ENCODE measurements at regions of chr1 and their contacts with region 1.

Region 1: GRCh38 chr1:231357831-231358354 is 19.8 kb downstream of the SPRTN start:
- DNase-seq: peak; percentile 63 to 68
- ATAC-seq: peak; percentile 75 to 78
- H3K4me3 ChIP-seq: peak overlapping the region in 1 of 4 donors; percentile 10
- H3K27ac ChIP-seq: peak overlapping the region; percentile 76 to 87 (median 82)
- H3K4me1 ChIP-seq: peaks cover 28 to 34% of the 10 kb centered on the region in 2 donors
- H3K27me3 ChIP-seq: no peaks in the 10 kb centered on the region
- CTCF ChIP-seq: peak; percentile 75 to 85 (median 81)
- POLR2A ChIP-seq: peak in 1 of 2 donors; percentile 43

Region 2: GRCh38 chr1:231315887-231316286 is 42.0 kb before region 1 on chr1:
- in situ Hi-C with region 1: no loop called
- intact Hi-C with region 1: no loop called
- DNase-seq: no peak
- ATAC-seq: peak; percentile 17 to 36
- H3K4me3 ChIP-seq: no peak overlapping the region
- H3K27ac ChIP-seq: no peak overlapping the region
- H3K4me1 ChIP-seq: no peaks in the 10 kb centered on the region
- H3K27me3 ChIP-seq: no peaks in the 10 kb centered on the region
- CTCF ChIP-seq: peak; percentile 25 to 64 (median 49)
- POLR2A ChIP-seq: no peak

Region 3: GRCh38 chr1:231383159-231383860 is 25.4 kb after region 1 on chr1:
- in situ Hi-C with region 1: no loop called
- intact Hi-C with region 1: loop called (anchors 1 kb)
- DNase-seq: peak; percentile 62 to 83
- ATAC-seq: peak; percentile 82 to 84
- H3K4me3 ChIP-seq: peak overlapping the region in 3 of 4 donors; percentile 16 to 50 (median 33)
- H3K27ac ChIP-seq: peak overlapping the region; percentile 82 to 89 (median 89)
- H3K4me1 ChIP-seq: peaks cover 86 to 94% of the 10 kb centered on the region in 2 donors
- H3K27me3 ChIP-seq: no peaks in the 10 kb centered on the region
- CTCF ChIP-seq: no peak
- POLR2A ChIP-seq: peak in 1 of 2 donors; percentile 32

Region 4: DNA sequence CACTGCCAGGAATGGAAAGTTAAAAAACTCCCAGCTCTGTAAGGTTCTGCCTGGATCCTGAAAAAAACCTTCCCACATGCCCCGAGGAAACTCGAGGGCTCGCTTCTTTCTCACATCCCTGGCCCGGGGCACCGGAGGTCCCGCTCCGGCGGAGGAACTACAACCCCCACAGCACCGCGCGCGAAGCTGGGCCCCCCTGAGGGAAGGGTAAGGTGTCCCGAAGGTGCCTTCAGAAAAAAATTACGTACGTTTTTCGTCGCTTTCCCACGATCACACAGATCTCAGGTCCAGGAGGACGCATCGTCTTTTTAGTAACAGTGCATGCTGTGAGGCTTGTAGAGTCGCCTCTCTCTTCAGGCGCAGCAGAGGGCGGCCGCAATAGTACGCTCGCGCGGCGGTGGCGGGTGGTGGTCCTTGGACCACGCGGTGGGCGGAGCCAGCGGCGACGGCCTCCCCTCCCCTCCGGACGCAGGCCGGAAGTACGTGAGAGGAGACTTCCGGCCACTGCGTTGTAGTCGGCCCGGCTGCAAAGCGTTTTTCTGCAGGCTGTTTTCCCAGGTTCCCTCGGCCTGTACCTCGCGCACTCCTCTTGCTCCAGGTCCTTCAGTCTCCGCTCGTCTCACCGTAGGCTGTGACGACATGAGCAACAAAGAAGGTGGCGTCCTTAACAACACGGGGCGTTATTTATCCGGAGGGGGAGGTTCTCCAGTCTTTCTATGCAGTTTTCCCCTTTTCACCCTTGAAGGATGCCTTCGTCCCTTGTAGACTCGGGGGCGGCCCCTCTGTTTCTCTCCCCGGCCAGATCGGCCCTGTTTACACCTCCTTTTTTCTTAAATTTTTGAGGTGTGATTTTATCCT is 170.5 kb after region 1 on chr1 and contains the start of gene TSNAX:
- in situ Hi-C with region 1: no loop called
- intact Hi-C with region 1: loop called (anchors 2 kb)
- DNase-seq: peak; percentile 84 to 90
- ATAC-seq: peak; percentile 90 to 96
- H3K4me3 ChIP-seq: peak within 1 kb of the TSS; percentile 70 to 93 (median 80)
- H3K27ac ChIP-seq: peak within 1 kb of the TSS; percentile 94 to 99 (median 96)
- H3K4me1 ChIP-seq: peaks cover 18 to 49% of the 10 kb centered on the region in 2 donors
- H3K27me3 ChIP-seq: no peaks in the 10 kb centered on the region
- CTCF ChIP-seq: no peak
- POLR2A ChIP-seq: peak; percentile 95
- total RNA-seq, gene TSNAX: 47.8 to 84.2 (median 77.8) TPM

Region 5: DNA sequence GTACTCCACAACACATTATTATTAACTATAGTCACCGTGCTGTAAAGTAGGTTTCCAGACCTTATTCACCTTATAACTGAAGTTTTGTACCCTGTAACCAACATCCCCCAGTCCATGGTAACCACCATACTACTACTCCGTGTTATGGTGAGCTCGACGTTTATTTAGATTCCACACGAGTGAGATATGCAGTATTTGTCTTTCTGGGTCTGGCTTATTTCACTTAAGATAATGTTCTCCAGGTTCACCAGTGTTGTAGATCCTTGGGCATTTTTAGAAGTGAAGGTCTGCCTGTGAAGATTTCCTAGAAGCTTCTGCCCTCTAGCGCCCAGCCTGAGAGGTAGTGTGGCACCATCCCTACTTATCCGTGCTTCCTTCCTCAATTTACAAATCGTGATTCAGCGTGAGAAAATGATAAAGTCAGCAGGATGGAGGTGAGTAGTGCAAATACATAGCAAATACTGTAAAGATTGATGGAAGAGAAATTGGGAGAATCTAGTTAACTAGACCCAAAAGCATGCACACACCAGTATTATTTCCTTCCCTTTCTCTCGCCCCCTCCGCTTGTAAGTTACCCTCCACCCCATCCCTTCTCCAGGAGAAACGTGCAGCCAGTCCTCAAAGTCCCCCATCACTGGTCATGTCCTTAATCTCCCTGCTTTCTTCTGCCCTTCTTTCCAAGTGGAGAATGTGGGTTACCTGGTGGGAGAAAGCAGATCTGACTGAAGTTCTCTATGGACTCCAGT is 232.7 kb after region 1 on chr1:
- in situ Hi-C with region 1: loop called in 3 of 4 experiments (anchors 5 kb)
- intact Hi-C with region 1: loop called (anchors 1 kb)
- DNase-seq: peak in 1 of 2 donors; percentile 32
- ATAC-seq: peak; percentile 82 to 92
- H3K4me3 ChIP-seq: no peak overlapping the region
- H3K27ac ChIP-seq: peak overlapping the region in 3 of 4 donors; percentile 20 to 42 (median 36)
- H3K4me1 ChIP-seq: peaks cover 3 to 12% of the 10 kb centered on the region in 2 donors
- H3K27me3 ChIP-seq: no peaks in the 10 kb centered on the region
- CTCF ChIP-seq: peak; percentile 61 to 76 (median 72)
- POLR2A ChIP-seq: no peak

Region 6: GRCh38 chr1:231603598-231604275 is 245.8 kb after region 1 on chr1:
- in situ Hi-C with region 1: loop called in 2 of 4 experiments (anchors 5 to 10 kb)
- intact Hi-C with region 1: loop called (anchors 1 kb)
- DNase-seq: no peak
- ATAC-seq: peak; percentile 64 to 73
- H3K4me3 ChIP-seq: peak overlapping the region; percentile 44 to 58 (median 52)
- H3K27ac ChIP-seq: peak overlapping the region; percentile 38 to 47 (median 44)
- H3K4me1 ChIP-seq: peaks cover 0 to 17% of the 10 kb centered on the region in 2 donors
- H3K27me3 ChIP-seq: no peaks in the 10 kb centered on the region
- CTCF ChIP-seq: peak; percentile 56 to 82 (median 71)
- POLR2A ChIP-seq: no peak

Region 7: DNA sequence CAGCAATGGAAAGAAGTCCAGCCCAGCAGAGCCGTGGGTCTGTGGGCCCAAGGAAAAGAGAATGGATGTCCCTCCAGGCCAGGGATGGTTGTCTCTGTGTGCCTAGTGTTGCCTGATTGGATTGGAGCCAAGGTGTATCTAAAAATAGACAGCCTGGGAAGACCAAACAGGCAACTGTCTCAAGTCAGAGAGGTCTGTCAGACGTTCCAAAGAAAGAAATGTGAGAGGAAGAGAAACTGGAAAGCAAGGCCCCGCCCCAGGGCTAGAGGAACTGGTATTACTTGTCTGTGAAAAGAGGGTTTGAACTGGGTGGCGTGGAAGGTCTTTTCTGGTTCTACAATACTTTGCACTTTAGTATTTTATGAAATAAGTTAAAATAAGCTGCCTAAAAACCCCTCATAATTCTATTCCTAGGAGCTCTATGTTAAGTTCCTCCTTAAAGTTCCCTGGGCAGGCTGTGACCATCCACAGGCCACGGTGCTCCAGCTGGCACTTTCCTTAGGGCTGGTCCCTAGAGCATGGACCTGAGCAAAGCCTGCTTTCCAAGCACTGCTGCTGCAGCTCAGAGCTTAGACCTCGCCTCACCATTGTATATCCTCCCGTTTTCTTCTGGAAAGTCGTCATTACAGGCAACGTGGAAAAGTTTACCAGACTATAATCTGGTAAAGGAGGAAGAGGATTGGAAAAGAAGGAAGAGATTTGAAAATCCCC is 420.3 kb after region 1 on chr1:
- in situ Hi-C with region 1: no loop called
- intact Hi-C with region 1: no loop called
- DNase-seq: peak; percentile 44 to 74
- ATAC-seq: peak; percentile 92 to 98
- H3K4me3 ChIP-seq: no peak overlapping the region
- H3K27ac ChIP-seq: peak overlapping the region; percentile 48 to 71 (median 58)
- H3K4me1 ChIP-seq: peaks cover 16 to 27% of the 10 kb centered on the region in 2 donors
- H3K27me3 ChIP-seq: no peaks in the 10 kb centered on the region
- CTCF ChIP-seq: no peak
- POLR2A ChIP-seq: no peak